ENCODE measurements at regions of chr2 and their contacts with region 1.

Region 1: GRCh38 chr2:164560181-164560792 is 61.0 kb downstream of the GRB14 start:
- DNase-seq: peak; percentile 13
- ATAC-seq: no peak
- H3K4me3 ChIP-seq: no peak overlapping the region
- H3K27ac ChIP-seq: no peak overlapping the region
- H3K4me1 ChIP-seq: no peaks in the 10 kb centered on the region
- H3K27me3 ChIP-seq: no peaks in the 10 kb centered on the region; the same call in 1 of the 2 replicates
- CTCF ChIP-seq: peak; percentile 77

Region 2: DNA sequence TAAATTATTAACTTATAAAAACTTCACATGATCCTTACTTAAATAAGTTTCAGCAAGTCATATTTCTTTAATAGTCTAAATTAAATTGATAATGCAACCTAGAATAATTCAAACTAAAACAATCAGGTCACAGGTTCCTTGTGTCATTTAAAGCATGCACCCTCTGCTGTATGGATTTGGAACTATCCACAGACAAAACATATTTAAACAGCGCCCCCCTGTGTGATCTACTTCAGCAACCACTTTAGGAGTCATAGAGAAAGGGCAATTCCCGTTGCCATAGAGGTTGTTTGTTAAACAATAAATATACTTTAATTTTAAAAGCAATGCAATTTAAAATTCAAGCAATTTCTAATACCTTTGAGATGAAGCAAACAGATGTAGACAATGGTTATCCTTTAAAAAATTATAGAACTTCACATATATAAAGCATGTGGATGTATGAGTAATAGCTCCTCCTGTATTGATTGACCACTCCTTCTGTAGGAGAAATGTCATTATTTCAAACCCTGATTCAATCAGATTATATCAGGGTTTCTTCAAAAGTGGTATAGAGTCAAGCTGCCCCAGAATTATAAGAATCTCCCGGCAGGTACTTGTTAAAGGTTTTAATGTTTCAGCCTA is 39.8 kb after region 1 on chr2:
- CTCF ChIA-PET with region 1: interaction called, 3 read pairs
- POLR2A ChIA-PET with region 1: no interaction called
- in situ Hi-C with region 1: no loop called
- intact Hi-C with region 1: loop called (anchors 1 kb)
- DNase-seq: peak; percentile 30
- ATAC-seq: peak; percentile 78; the same call in 1 of the 2 replicates
- H3K4me3 ChIP-seq: no peak overlapping the region
- H3K27ac ChIP-seq: no peak overlapping the region
- H3K4me1 ChIP-seq: no peaks in the 10 kb centered on the region
- H3K27me3 ChIP-seq: no peaks in the 10 kb centered on the region
- CTCF ChIP-seq: peak; percentile 73; the same call in 1 of the 2 replicates

Region 3: GRCh38 chr2:164661362-164661761 is 101.1 kb after region 1 on chr2:
- CTCF ChIA-PET with region 1: no interaction called
- POLR2A ChIA-PET with region 1: no interaction called
- in situ Hi-C with region 1: no loop called
- intact Hi-C with region 1: no loop called
- DNase-seq: no peak
- ATAC-seq: no peak
- H3K4me3 ChIP-seq: no peak overlapping the region
- H3K27ac ChIP-seq: no peak overlapping the region
- H3K4me1 ChIP-seq: no peaks in the 10 kb centered on the region
- H3K27me3 ChIP-seq: no peaks in the 10 kb centered on the region
- CTCF ChIP-seq: no peak

Region 4: DNA sequence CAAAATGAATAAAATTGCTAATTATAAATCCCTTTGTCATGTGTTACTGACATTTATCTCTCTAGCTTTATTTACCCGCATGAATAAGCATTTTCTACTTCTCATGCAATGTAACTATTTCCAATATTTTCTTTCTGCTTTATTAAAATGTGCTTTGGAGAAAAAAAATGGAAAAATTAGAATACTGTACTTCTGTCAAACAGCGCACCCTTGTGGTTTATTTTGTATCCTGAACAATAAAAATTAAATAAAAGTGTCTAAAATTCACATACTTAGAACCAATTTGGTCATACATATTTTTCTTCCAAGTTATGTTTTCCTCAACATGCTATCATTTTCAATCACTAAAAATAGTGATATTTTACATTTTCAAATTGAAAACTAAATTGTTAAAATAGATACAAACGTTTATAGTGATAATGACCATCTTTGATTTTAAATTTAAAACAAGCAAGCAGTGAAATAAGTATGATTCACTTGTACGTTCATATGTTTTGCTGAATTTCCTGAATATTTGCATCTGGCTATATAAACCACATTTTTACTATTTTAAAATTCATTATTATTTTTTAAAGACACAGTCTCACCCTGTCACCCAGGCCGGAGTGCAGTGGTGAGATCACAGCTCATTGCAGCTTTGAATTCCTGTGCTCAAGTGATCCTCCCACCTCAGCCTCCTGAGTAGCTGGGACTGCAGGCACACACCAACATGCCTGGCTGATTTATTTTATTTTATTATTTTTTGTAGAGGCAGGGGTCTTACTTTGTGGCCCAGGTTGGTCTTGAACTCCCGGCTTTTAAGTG is 156.9 kb after region 1 on chr2:
- CTCF ChIA-PET with region 1: no interaction called
- POLR2A ChIA-PET with region 1: no interaction called
- in situ Hi-C with region 1: no loop called
- intact Hi-C with region 1: loop called (anchors 1 kb)
- DNase-seq: no peak
- ATAC-seq: no peak
- H3K4me3 ChIP-seq: no peak overlapping the region
- H3K27ac ChIP-seq: no peak overlapping the region
- H3K4me1 ChIP-seq: no peaks in the 10 kb centered on the region
- H3K27me3 ChIP-seq: no peaks in the 10 kb centered on the region
- CTCF ChIP-seq: peak; percentile 57; the same call in 1 of the 2 replicates

Region 5: DNA sequence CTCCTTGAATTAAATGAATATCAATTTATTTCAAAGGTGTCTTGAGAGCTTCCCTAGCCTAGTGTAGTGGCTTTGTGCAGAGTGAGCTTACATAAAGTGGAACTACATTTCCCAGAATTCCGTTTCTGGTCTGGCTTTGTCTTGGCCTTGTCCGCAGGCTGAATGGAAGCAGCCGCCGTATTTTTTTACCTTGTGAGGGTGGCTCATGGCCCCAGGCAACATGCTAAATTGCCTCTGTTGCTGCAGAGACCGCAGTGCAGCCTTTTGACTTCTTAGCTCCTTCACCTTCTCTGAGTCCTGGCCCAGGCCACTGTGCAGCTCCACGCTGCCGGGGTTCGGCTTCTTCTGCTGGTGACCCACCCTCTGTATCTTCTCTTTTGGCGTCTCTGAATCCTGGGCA is 509.8 kb after region 1 on chr2:
- CTCF ChIA-PET with region 1: no interaction called
- POLR2A ChIA-PET with region 1: no interaction called
- in situ Hi-C with region 1: no loop called
- intact Hi-C with region 1: no loop called
- DNase-seq: no peak
- ATAC-seq: no peak
- H3K4me3 ChIP-seq: no peak overlapping the region
- H3K27ac ChIP-seq: no peak overlapping the region
- H3K4me1 ChIP-seq: no peaks in the 10 kb centered on the region
- H3K27me3 ChIP-seq: no peaks in the 10 kb centered on the region
- CTCF ChIP-seq: no peak